ENCODE measurements at regions of chr2 and their contacts with region 1.

Region 1: GRCh38 chr2:134118279-134119116 is 135.4 kb upstream of the MGAT5 start:
- DNase-seq: peak; percentile 57 to 97 (median 88)

Region 2: GRCh38 chr2:133718688-133719201 is 399.8 kb before region 1 on chr2:
- intact Hi-C with region 1: no loop called
- DNase-seq: peak in 7 of 10 donors; percentile 16 to 87 (median 38)

Region 3: GRCh38 chr2:133886735-133887660 is 231.5 kb before region 1 on chr2:
- intact Hi-C with region 1: loop called (anchors 5 kb)
- DNase-seq: peak; percentile 52 to 96 (median 82)

Region 4: GRCh38 chr2:133986081-133986837 is 132.2 kb before region 1 on chr2:
- intact Hi-C with region 1: no loop called
- DNase-seq: no peak

Region 5: GRCh38 chr2:134207564-134208209 is 89.2 kb after region 1 on chr2:
- intact Hi-C with region 1: loop called (anchors 5 kb)
- DNase-seq: peak in 2 of 10 donors; percentile 42 to 43

Region 6: DNA sequence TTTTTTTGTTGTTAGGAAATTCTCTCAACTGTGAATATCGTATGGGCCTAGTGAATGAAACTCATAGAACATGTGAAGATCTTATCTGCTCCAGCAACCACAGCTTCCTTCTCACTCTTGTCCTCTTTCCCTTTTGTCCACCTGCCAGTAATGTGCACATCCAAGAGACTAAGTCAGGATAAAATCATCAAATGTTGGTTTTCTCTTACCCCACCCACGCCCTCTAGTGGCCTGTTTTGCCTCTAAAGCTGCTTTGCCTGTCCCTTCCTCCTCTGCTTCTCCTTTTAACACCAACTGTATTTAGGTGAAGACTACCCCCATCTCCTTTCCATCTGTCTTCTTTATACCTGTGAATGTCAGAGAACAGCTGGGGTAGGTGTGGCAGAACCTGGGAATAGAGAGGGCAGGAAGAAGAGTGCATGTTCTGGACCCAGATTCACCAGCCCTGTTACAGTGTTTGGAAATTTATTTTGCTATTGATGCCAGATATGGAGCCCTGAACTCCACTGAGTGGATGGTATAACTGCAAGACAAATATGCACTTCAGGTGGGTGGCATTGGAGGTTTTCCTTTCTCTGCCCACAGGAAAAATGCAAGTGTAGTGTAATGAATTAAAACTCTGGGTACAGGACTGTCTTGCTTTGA is 127.0 kb after region 1 on chr2:
- intact Hi-C with region 1: loop called (anchors 1 kb)
- DNase-seq: peak; percentile 36 to 92 (median 84)

Region 7: DNA sequence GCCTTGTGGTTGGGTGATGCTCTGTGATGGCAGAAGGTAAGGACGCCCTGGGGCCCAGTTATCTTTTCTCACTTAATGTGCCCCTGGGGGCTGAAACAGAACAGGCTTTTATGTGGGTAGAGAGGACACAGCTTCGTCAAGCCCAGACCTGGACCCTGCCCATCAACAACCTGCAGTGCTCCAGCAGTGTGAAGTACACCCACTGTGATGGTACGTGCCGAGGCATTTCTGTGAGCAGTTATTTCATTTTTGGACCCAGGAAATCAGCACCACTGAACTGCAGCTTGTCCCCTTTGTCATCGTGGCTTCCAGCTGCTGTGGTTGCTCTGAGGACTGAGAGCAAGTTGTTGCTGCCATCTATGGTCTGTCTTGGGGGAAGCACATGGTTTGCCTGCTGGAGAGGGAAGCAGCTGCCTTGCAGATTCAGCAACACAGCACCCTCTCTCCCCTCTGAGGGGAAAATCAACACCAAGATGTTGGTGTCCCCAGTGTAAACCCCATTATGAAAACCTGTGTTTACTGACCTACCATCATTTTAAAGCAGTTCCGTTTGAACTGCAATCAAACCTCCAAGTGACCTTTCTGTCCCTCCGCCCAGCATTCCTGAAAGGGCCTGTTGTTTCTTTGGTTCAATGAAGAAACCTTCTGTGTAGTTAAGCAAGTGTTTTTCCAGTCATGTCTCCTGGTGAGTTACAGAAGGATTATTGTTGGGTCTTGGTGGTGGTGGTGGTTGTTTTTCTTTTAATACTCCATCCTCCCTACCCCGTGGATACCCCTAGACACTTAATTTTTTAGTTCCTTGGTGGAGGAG is 293.5 kb after region 1 on chr2:
- intact Hi-C with region 1: loop called (anchors 1 kb)
- DNase-seq: peak; percentile 71 to 97 (median 82)

Region 8: DNA sequence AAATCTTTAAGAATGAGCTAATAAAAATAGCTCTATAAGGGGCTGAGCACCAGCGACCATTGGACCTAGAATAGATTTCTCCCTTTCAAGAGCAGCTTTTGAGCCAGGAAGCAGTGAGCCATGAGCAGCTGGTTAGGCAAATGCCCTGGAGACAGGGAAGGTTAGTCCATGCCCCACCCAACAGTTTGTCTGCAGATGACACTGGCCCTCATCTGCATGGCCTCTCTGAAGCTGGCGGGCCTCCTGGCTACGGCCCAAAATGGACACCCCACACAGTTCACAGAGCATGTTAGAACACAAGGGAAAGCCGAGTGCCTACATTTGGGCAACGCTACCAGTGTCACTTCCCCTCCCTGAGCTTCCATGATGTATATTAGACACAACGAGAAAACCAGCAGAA is 336.4 kb after region 1 on chr2:
- intact Hi-C with region 1: loop called (anchors 1 kb)
- DNase-seq: peak in 1 of 10 donors; percentile 43

Region 9: GRCh38 chr2:134609924-134610513 is 491.5 kb after region 1 on chr2:
- intact Hi-C with region 1: no loop called
- DNase-seq: peak in 3 of 10 donors; percentile 62 to 76 (median 67)